Dorsolateral prefrontal cortex (tissue), 120 donors: ENCODE measurements at regions of chr16 and their contacts with region 1.

Region 1: GRCh38 chr16:51268237-51268636 is 117.2 kb upstream of the SALL1 start:
- DNase-seq: peak in 9 of 10 donors; percentile 32 to 79 (median 61)
- H3K4me3 ChIP-seq: peak overlapping the region in 34 of 59 donors; percentile 1 to 58 (median 23)
- H3K27ac ChIP-seq: peak overlapping the region in 58 of 59 donors; percentile 21 to 98 (median 89)
- H3K27me3 ChIP-seq: peaks cover 0 to 3% (median 0%) of the 10 kb centered on the region in 45 donors
- CTCF ChIP-seq: no peak

Region 2: DNA sequence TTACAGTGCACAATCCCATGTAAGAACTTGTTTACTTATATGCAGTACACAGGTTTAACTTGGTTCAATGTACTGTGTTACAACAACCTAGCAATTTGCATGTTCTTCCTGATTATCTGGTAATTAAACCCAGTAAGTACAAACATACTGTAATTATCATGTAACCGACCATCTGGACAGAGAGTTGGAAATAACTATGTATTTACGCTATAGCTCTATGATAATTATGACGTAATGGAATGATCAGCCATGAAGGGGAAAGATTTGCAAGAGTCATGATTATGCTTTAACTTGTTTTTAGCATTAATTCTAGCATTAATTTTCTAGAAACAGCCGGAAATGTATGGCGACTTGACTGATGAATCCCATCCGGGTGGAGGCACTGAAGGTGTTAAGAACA is 42.4 kb before region 1 on chr16:
- intact Hi-C with region 1: no loop called
- DNase-seq: no peak
- H3K4me3 ChIP-seq: no peak overlapping the region
- H3K27ac ChIP-seq: no peak overlapping the region
- H3K27me3 ChIP-seq: peaks cover 0 to 6% (median 0%) of the 10 kb centered on the region in 45 donors
- CTCF ChIP-seq: no peak

Region 3: DNA sequence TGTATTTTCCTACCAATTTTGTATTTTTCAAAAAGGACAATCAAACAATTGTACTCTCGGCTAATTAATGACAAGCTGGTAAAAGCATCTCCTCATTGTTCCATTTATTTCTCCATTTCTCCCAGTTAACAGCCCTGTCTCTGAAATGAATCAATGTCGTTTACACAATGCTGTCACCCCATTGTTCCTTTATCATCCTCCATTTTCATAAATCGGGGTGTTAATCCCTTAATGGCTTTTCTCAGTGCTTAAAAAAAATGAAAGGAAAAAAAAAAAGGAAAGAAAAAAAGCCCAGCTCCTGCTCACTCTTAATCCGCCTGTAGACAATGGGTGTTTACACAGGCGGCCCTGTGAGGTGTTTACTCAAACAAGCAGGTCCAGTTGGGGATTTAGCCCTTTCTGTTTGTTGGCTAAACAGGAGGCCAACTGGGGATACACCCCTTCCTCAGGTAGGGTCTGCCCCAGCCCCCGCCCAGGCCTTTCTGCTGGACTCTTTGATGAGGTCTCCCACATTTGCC is 30.3 kb before region 1 on chr16:
- intact Hi-C with region 1: loop called in 1 of 2 experiments (anchors 5 kb)
- DNase-seq: no peak
- H3K4me3 ChIP-seq: peak overlapping the region in 11 of 59 donors; percentile 3 to 31 (median 18)
- H3K27ac ChIP-seq: peak overlapping the region; percentile 4 to 99 (median 94)
- H3K27me3 ChIP-seq: no peaks in the 10 kb centered on the region
- CTCF ChIP-seq: peak in 1 of 56 donors; percentile 16

Region 4: GRCh38 chr16:51302042-51302441 is 33.8 kb after region 1 on chr16:
- intact Hi-C with region 1: no loop called
- DNase-seq: no peak
- H3K4me3 ChIP-seq: no peak overlapping the region
- H3K27ac ChIP-seq: no peak overlapping the region
- H3K27me3 ChIP-seq: peaks cover 0 to 3% (median 0%) of the 10 kb centered on the region in 45 donors
- CTCF ChIP-seq: peak in 8 of 56 donors; percentile 7 to 41 (median 18)

Region 5: GRCh38 chr16:51431517-51432241 is 163.4 kb after region 1 on chr16:
- intact Hi-C with region 1: loop called in 1 of 2 experiments (anchors 10 kb)
- DNase-seq: peak in 5 of 10 donors; percentile 33 to 71 (median 53)
- H3K4me3 ChIP-seq: peak overlapping the region in 13 of 59 donors; percentile 7 to 51 (median 27)
- H3K27ac ChIP-seq: peak overlapping the region in 53 of 59 donors; percentile 4 to 90 (median 67)
- H3K27me3 ChIP-seq: peaks cover 0 to 13% (median 0%) of the 10 kb centered on the region in 45 donors
- CTCF ChIP-seq: no peak

Region 6: GRCh38 chr16:51982715-51983680 is 714.8 kb after region 1 on chr16:
- intact Hi-C with region 1: loop called in 1 of 2 experiments (anchors 10 kb)
- DNase-seq: peak in 4 of 10 donors; percentile 5 to 63 (median 34)
- H3K4me3 ChIP-seq: peak overlapping the region in 1 of 59 donors; percentile 1
- H3K27ac ChIP-seq: peak overlapping the region in 10 of 59 donors; percentile 2 to 67 (median 34)
- H3K27me3 ChIP-seq: peaks cover 0 to 6% (median 0%) of the 10 kb centered on the region in 45 donors
- CTCF ChIP-seq: peak; percentile 69 to 99 (median 89)